GM12878 (cell line): ENCODE measurements at regions of chr15 and their contacts with region 1.

Region 1: GRCh38 chr15:33737687-33738601 is 230.4 kb upstream of the CHRM5 start:
- DNase-seq: no peak
- ATAC-seq: peak; percentile 73
- H3K4me3 ChIP-seq: no peak overlapping the region
- H3K27ac ChIP-seq: no peak overlapping the region
- H3K4me1 ChIP-seq: no peaks in the 10 kb centered on the region
- H3K27me3 ChIP-seq: no peaks in the 10 kb centered on the region
- CTCF ChIP-seq: peak; percentile 63 to 84 (median 84)
- EP300 ChIP-seq: no peak
- POLR2A ChIP-seq: no peak
- RAD21 ChIP-seq: peak; percentile 37

Region 2: DNA sequence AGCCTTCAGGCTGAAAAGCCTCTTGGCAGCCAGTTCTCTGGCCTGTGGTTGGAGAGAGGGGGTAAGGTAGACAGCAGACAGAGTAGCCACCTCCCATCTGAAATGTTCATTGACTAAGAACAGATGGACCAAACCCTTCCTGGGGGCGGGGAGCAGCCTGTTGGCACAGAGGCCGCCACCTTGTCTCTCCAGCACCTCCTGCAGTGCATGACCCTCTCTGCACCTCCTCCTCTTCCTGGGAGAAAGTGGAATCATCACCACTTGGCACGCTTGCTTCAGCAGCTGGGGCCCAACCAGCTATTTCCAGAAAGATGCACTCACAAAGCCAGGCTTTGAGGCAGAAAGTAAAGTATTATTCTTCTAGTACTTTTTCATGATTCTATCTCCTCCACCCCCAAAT is 83.1 kb before region 1 on chr15:
- CTCF ChIA-PET with region 1: no interaction called
- POLR2A ChIA-PET with region 1: no interaction called
- RAD21 ChIA-PET with region 1: no interaction called
- SMC1A ChIA-PET with region 1: no interaction called
- in situ Hi-C with region 1: no loop called
- intact Hi-C with region 1: no loop called
- DNase-seq: no peak
- ATAC-seq: no peak
- H3K4me3 ChIP-seq: no peak overlapping the region
- H3K27ac ChIP-seq: no peak overlapping the region
- H3K4me1 ChIP-seq: no peaks in the 10 kb centered on the region
- H3K27me3 ChIP-seq: no peaks in the 10 kb centered on the region; a peak in 1 of 4 replicates
- CTCF ChIP-seq: no peak
- EP300 ChIP-seq: no peak
- POLR2A ChIP-seq: no peak
- RAD21 ChIP-seq: no peak

Region 3: GRCh38 chr15:33722005-33722672 is 15.8 kb before region 1 on chr15:
- CTCF ChIA-PET with region 1: interaction called, 16 read pairs
- POLR2A ChIA-PET with region 1: no interaction called
- RAD21 ChIA-PET with region 1: no interaction called
- SMC1A ChIA-PET with region 1: interaction called, 4 read pairs
- in situ Hi-C with region 1: no loop called
- intact Hi-C with region 1: no loop called
- DNase-seq: peak; percentile 24
- ATAC-seq: peak; percentile 52
- H3K4me3 ChIP-seq: no peak overlapping the region
- H3K27ac ChIP-seq: no peak overlapping the region
- H3K4me1 ChIP-seq: no peaks in the 10 kb centered on the region
- H3K27me3 ChIP-seq: peaks cover 0 to 3% of the 10 kb centered on the region in 2 experiments; a peak in 1 of 4 replicates
- CTCF ChIP-seq: no peak
- EP300 ChIP-seq: no peak
- POLR2A ChIP-seq: no peak
- RAD21 ChIP-seq: no peak

Region 4: DNA sequence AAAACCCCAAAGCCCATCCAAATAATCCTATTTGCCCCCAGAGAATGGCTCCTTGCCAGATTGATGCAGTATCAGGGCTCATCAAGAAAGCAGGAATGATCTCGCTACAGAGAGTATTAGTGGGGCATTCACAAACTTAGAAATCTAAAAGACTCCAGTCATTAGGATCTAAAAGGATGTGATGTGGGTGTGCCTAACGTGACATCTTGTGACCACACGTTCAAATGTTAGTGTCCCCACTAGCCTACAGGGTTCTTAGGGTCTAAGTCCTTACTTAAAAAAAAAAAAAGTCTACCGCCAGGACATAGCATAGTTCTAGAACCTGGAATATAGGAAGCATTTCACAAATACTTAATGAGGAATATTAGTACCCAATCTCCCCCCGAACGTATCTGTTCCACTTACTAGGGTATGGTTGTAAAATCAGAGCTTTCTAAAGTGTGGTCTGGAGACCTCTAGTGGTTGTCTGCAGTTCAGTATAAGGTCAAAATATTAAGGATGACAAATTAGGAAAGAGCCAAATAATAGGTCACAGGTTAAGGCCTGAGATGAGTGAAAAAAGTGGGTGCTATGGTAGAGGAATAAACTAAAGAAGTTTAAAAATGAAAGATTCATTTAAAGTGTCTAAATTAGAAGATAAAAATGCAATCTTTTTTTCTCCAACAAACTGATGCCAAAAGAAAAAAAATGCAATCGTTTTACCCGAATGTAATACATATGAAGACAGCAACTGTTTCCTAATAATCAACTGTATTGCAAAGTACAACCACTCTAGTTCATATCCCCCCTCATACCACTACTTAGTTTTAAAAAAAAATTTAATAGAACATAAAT is 226.1 kb after region 1 on chr15:
- CTCF ChIA-PET with region 1: interaction called, 26 read pairs
- POLR2A ChIA-PET with region 1: no interaction called
- RAD21 ChIA-PET with region 1: interaction called, 4 read pairs
- SMC1A ChIA-PET with region 1: interaction called, 10 read pairs
- in situ Hi-C with region 1: loop called (anchors 5 kb)
- intact Hi-C with region 1: loop called (anchors 1 kb)
- DNase-seq: no peak
- ATAC-seq: peak; percentile 85
- H3K4me3 ChIP-seq: no peak overlapping the region
- H3K27ac ChIP-seq: no peak overlapping the region
- H3K4me1 ChIP-seq: no peaks in the 10 kb centered on the region
- H3K27me3 ChIP-seq: no peaks in the 10 kb centered on the region
- CTCF ChIP-seq: peak; percentile 51 to 73 (median 63)
- EP300 ChIP-seq: no peak
- POLR2A ChIP-seq: no peak
- RAD21 ChIP-seq: peak; percentile 86

Region 5: DNA sequence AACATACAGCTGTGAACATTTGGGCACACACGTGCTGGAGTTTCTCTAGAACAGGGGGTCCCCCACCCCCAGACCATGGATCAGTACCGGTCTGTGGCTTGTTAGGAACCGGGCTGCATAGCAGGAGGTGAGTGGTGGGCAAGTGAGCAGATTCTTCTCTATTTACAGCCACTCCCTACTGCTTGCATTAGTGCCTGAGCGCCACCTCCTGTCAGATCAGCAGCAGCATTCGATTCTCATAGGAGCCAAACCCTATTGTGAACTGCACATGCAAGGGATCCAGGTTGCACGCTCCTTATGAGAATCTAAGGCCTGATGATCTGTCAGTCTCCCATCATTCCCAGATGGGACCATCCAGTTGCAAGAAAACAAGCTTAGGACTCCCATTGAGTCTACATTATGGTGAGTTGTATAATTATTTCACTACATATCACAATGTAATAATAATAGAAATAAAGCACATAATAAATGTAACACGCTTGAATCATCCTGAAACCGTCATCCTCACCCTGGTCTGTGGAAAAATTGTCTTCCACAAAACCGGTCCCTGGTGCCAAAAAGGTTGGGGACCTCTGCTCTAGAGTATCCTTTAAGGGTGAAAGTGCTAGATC is 256.2 kb after region 1 on chr15:
- CTCF ChIA-PET with region 1: interaction called, 16 read pairs
- POLR2A ChIA-PET with region 1: no interaction called
- RAD21 ChIA-PET with region 1: no interaction called
- SMC1A ChIA-PET with region 1: no interaction called
- in situ Hi-C with region 1: no loop called
- intact Hi-C with region 1: loop called (anchors 1 kb)
- DNase-seq: no peak
- ATAC-seq: peak; percentile 55
- H3K4me3 ChIP-seq: no peak overlapping the region
- H3K27ac ChIP-seq: no peak overlapping the region
- H3K4me1 ChIP-seq: no peaks in the 10 kb centered on the region
- H3K27me3 ChIP-seq: no peaks in the 10 kb centered on the region
- CTCF ChIP-seq: peak; percentile 32 to 47 (median 35); a peak in 4 of 6 replicates
- EP300 ChIP-seq: no peak
- POLR2A ChIP-seq: no peak
- RAD21 ChIP-seq: peak; percentile 64